Naive thymus-derived CD4-positive, alpha-beta T cell (primary cell): ENCODE measurements at regions of chr18 and their contacts with region 1.

Region 1: GRCh38 chr18:22933206-22933957 is at the start of gene RBBP8:
- DNase-seq: peak; percentile 60 to 92 (median 81)
- ATAC-seq: peak; percentile 84
- H3K4me3 ChIP-seq: peak within 1 kb of the TSS; percentile 92
- H3K4me3 Mint-ChIP-seq: peak within 1 kb of the TSS; percentile 84 to 97 (median 92)
- H3K27ac ChIP-seq: peak within 1 kb of the TSS; percentile 86
- H3K27ac Mint-ChIP-seq: peak within 1 kb of the TSS in 8 of 9 donors; percentile 76 to 95 (median 89)
- H3K4me1 ChIP-seq: no peaks in the 10 kb centered on the region
- H3K4me1 Mint-ChIP-seq: peaks cover 7 to 37% (median 12%) of the 10 kb centered on the region in 7 donors
- H3K27me3 ChIP-seq: no peaks in the 10 kb centered on the region
- H3K27me3 Mint-ChIP-seq: peaks cover 0 to 5% (median 0%) of the 10 kb centered on the region in 5 donors
- total RNA-seq, gene RBBP8: 1.5 to 55.8 (median 2.5) TPM

Region 2: DNA sequence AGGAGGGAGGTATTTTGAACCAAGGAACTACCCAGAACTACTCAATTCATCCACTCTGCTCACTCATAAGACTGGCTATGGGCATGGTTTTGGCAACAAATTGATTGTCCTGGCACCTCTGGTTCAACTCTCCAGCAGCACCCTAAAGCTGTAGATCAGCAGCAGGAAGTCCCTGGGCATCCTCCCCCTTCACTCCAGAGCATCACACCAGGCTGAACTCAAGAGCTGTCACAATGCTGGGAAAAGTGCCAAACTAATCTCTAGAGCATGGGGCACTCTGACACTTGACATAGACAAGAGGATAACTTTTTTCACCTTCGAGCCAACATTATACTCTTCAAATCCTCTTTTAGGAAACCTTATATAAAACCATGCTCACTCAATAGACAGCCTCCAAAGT is 154.4 kb before region 1 on chr18:
- CTCF ChIA-PET with region 1: no interaction called
- POLR2A ChIA-PET with region 1: no interaction called
- intact Hi-C with region 1: no loop called
- DNase-seq: no peak
- ATAC-seq: no peak
- H3K4me3 ChIP-seq: no peak overlapping the region
- H3K4me3 Mint-ChIP-seq: no peak overlapping the region
- H3K27ac ChIP-seq: no peak overlapping the region
- H3K27ac Mint-ChIP-seq: no peak overlapping the region
- H3K4me1 ChIP-seq: no peaks in the 10 kb centered on the region
- H3K4me1 Mint-ChIP-seq: peaks cover 0 to 2% (median 0%) of the 10 kb centered on the region in 7 donors
- H3K27me3 ChIP-seq: no peaks in the 10 kb centered on the region
- H3K27me3 Mint-ChIP-seq: peaks cover 13 to 36% (median 19%) of the 10 kb centered on the region in 5 donors

Region 3: DNA sequence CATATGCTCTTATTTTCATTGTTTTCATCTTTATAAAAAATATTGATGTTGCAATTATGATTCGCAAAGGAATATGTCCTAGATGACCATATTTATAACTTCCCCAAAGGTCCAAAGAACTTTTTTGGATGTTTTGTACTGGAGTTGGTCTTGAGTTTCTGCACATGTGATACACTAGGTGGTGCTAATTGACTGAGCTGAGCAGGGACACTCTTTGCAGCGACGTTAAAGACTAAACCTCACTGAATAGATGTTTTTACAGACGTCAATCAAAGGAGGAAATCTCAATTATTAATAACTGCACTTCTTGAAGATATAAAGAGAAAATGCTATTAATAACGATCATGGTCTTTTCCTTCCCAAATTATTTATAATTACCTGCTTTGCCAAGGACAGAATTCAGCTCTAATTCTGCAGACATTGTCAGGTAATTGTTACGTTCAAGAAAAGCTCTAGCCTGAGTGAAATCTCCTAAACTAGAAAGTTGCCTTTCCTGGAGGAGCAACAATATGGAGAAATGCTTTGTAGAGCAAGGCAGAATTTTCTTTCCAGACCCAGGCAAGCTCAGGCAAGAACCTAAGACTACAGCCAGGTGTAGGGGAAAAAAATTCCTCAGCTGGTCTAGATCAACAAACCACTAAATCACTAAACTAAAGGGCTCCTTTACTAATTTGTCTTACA is 119.6 kb before region 1 on chr18:
- CTCF ChIA-PET with region 1: no interaction called
- POLR2A ChIA-PET with region 1: no interaction called
- intact Hi-C with region 1: loop called in 1 of 2 experiments (anchors 5 kb)
- DNase-seq: peak in 3 of 9 donors; percentile 5 to 27 (median 5)
- ATAC-seq: peak; percentile 50
- H3K4me3 ChIP-seq: no peak overlapping the region
- H3K4me3 Mint-ChIP-seq: no peak overlapping the region
- H3K27ac ChIP-seq: no peak overlapping the region
- H3K27ac Mint-ChIP-seq: no peak overlapping the region
- H3K4me1 ChIP-seq: no peaks in the 10 kb centered on the region
- H3K4me1 Mint-ChIP-seq: no peaks in the 10 kb centered on the region
- H3K27me3 ChIP-seq: no peaks in the 10 kb centered on the region
- H3K27me3 Mint-ChIP-seq: peaks cover 14 to 32% (median 25%) of the 10 kb centered on the region in 5 donors

Region 4: DNA sequence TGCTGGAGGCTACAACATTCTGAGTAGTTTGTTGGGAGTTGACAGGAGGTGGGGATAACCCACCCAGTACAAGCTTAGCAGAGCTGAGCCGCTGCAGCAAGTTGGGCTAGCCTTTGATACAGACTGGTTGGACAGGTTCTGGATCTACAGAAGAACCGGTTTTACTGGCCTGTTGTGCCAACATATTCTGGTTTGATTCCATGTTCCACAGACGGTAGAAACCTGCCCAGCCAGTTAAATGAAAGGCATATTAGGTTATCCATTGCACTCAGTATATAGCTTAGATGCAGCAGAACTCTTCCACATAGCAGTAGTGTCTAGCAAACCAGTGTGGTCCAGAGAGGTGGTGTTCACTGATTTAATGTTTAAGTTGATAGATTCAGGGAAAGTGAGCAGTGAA is 19.5 kb before region 1 on chr18:
- CTCF ChIA-PET with region 1: no interaction called
- POLR2A ChIA-PET with region 1: no interaction called
- intact Hi-C with region 1: no loop called
- DNase-seq: no peak
- ATAC-seq: no peak
- H3K4me3 ChIP-seq: no peak overlapping the region
- H3K4me3 Mint-ChIP-seq: no peak overlapping the region
- H3K27ac ChIP-seq: no peak overlapping the region
- H3K27ac Mint-ChIP-seq: no peak overlapping the region
- H3K4me1 ChIP-seq: no peaks in the 10 kb centered on the region
- H3K4me1 Mint-ChIP-seq: no peaks in the 10 kb centered on the region
- H3K27me3 ChIP-seq: peaks cover 0 to 4% of the 10 kb centered on the region in 2 donors
- H3K27me3 Mint-ChIP-seq: peaks cover 6 to 20% (median 12%) of the 10 kb centered on the region in 5 donors

Region 5: DNA sequence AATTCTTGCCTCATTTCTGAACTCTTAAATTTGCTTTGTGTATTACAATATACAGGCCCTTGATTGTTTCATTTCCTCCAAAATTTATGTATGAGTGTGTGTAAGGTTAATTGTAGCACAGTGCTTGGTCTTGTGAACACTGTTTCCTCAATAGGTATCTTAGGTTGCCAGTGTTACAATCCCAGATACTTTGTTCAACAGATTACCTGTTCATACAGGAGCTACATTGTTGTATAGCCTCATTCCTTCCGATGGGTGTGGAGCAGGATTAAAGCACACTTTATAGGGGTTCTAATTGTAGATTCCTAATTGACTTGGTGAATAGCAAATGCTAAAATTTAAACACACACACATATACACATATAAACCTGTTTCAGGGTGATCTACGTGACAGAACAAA is 10.5 kb after region 1 on chr18:
- CTCF ChIA-PET with region 1: no interaction called
- POLR2A ChIA-PET with region 1: no interaction called
- intact Hi-C with region 1: no loop called
- DNase-seq: no peak
- ATAC-seq: no peak
- H3K4me3 ChIP-seq: no peak overlapping the region
- H3K4me3 Mint-ChIP-seq: no peak overlapping the region
- H3K27ac ChIP-seq: no peak overlapping the region
- H3K27ac Mint-ChIP-seq: no peak overlapping the region
- H3K4me1 ChIP-seq: no peaks in the 10 kb centered on the region
- H3K4me1 Mint-ChIP-seq: peaks cover 0 to 12% (median 0%) of the 10 kb centered on the region in 7 donors
- H3K27me3 ChIP-seq: no peaks in the 10 kb centered on the region
- H3K27me3 Mint-ChIP-seq: no peaks in the 10 kb centered on the region

Region 6: GRCh38 chr18:23032030-23032582 is 98.7 kb after region 1 on chr18:
- CTCF ChIA-PET with region 1: no interaction called
- POLR2A ChIA-PET with region 1: no interaction called
- intact Hi-C with region 1: loop called in 1 of 2 experiments (anchors 2 kb)
- DNase-seq: no peak
- ATAC-seq: no peak
- H3K4me3 ChIP-seq: no peak overlapping the region
- H3K4me3 Mint-ChIP-seq: no peak overlapping the region
- H3K27ac ChIP-seq: no peak overlapping the region
- H3K27ac Mint-ChIP-seq: peak overlapping the region in 2 of 9 donors; percentile 51
- H3K4me1 ChIP-seq: no peaks in the 10 kb centered on the region
- H3K4me1 Mint-ChIP-seq: peaks cover 0 to 12% (median 8%) of the 10 kb centered on the region in 7 donors
- H3K27me3 ChIP-seq: no peaks in the 10 kb centered on the region
- H3K27me3 Mint-ChIP-seq: no peaks in the 10 kb centered on the region

Region 7: DNA sequence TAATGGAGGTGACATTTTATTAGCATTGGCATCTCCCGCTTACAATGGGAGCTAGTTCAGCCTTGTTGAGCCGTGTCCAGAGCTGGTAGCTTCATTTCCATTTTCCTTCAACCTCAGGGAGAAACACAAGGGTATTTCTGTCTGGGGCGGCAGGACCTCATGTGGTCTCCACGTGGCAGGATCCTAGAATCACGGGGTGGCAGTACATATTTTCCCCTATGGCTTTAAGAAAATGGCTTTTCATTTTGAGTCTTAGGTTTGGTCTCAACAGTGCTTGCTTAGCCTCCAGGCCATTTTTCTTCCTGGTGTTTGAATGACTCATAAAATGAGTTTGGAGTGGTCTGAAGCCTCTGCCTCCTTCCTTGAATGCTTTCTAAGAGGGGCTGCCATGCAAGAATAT is 222.2 kb after region 1 on chr18:
- CTCF ChIA-PET with region 1: no interaction called
- POLR2A ChIA-PET with region 1: no interaction called
- intact Hi-C with region 1: no loop called
- DNase-seq: no peak
- ATAC-seq: no peak
- H3K4me3 ChIP-seq: no peak overlapping the region
- H3K4me3 Mint-ChIP-seq: no peak overlapping the region
- H3K27ac ChIP-seq: no peak overlapping the region
- H3K27ac Mint-ChIP-seq: no peak overlapping the region
- H3K4me1 ChIP-seq: no peaks in the 10 kb centered on the region
- H3K4me1 Mint-ChIP-seq: no peaks in the 10 kb centered on the region
- H3K27me3 ChIP-seq: no peaks in the 10 kb centered on the region
- H3K27me3 Mint-ChIP-seq: peaks cover 0 to 5% (median 0%) of the 10 kb centered on the region in 5 donors

Region 8: GRCh38 chr18:23231340-23232021 is 298.1 kb after region 1 on chr18:
- CTCF ChIA-PET with region 1: no interaction called
- POLR2A ChIA-PET with region 1: no interaction called
- intact Hi-C with region 1: loop called in 1 of 2 experiments (anchors 2 kb)
- DNase-seq: peak; percentile 14 to 86 (median 70)
- ATAC-seq: peak; percentile 93
- H3K4me3 ChIP-seq: peak overlapping the region; percentile 10
- H3K4me3 Mint-ChIP-seq: peak overlapping the region in 9 of 10 donors; percentile 7 to 80 (median 55)
- H3K27ac ChIP-seq: no peak overlapping the region
- H3K27ac Mint-ChIP-seq: peak overlapping the region; percentile 76 to 96 (median 88)
- H3K4me1 ChIP-seq: peaks cover 8 to 14% of the 10 kb centered on the region in 2 donors
- H3K4me1 Mint-ChIP-seq: peaks cover 0 to 78% (median 21%) of the 10 kb centered on the region in 7 donors
- H3K27me3 ChIP-seq: no peaks in the 10 kb centered on the region
- H3K27me3 Mint-ChIP-seq: no peaks in the 10 kb centered on the region

Region 9: GRCh38 chr18:23406271-23406787 is 472.9 kb after region 1 on chr18:
- CTCF ChIA-PET with region 1: interaction called, 4 read pairs
- POLR2A ChIA-PET with region 1: no interaction called
- intact Hi-C with region 1: loop called (anchors 1 kb)
- DNase-seq: no peak
- ATAC-seq: no peak
- H3K4me3 ChIP-seq: no peak overlapping the region
- H3K4me3 Mint-ChIP-seq: no peak overlapping the region
- H3K27ac ChIP-seq: no peak overlapping the region
- H3K27ac Mint-ChIP-seq: no peak overlapping the region
- H3K4me1 ChIP-seq: no peaks in the 10 kb centered on the region
- H3K4me1 Mint-ChIP-seq: peaks cover 0 to 7% (median 1%) of the 10 kb centered on the region in 7 donors
- H3K27me3 ChIP-seq: no peaks in the 10 kb centered on the region
- H3K27me3 Mint-ChIP-seq: no peaks in the 10 kb centered on the region

Region 10: GRCh38 chr18:24075731-24076130 is 1142.3 kb after region 1 on chr18:
- CTCF ChIA-PET with region 1: no interaction called
- POLR2A ChIA-PET with region 1: no interaction called
- intact Hi-C with region 1: loop called in 1 of 2 experiments (anchors 5 kb)
- DNase-seq: no peak
- ATAC-seq: no peak
- H3K4me3 ChIP-seq: no peak overlapping the region
- H3K4me3 Mint-ChIP-seq: peak overlapping the region in 3 of 10 donors; percentile 20 to 38 (median 29)
- H3K27ac ChIP-seq: no peak overlapping the region
- H3K27ac Mint-ChIP-seq: peak overlapping the region in 8 of 9 donors; percentile 52 to 86 (median 67)
- H3K4me1 ChIP-seq: peaks cover 7 to 16% of the 10 kb centered on the region in 2 donors
- H3K4me1 Mint-ChIP-seq: peaks cover 24 to 63% (median 51%) of the 10 kb centered on the region in 7 donors
- H3K27me3 ChIP-seq: no peaks in the 10 kb centered on the region
- H3K27me3 Mint-ChIP-seq: no peaks in the 10 kb centered on the region